ENCODE measurements at regions of chr16 and their contacts with region 1.

Region 1: GRCh38 chr16:67561824-67562525 is 351 bp upstream of the CTCF start:
- DNase-seq: peak; percentile 89 to 97
- H3K4me3 ChIP-seq: peak overlapping the region; percentile 99
- H3K27ac ChIP-seq: peak overlapping the region; percentile 100
- H3K4me1 ChIP-seq: peaks cover 7 to 24% of the 10 kb centered on the region in 2 donors
- H3K27me3 ChIP-seq: no peaks in the 10 kb centered on the region
- CTCF ChIP-seq: no peak

Region 2: GRCh38 chr16:67480833-67481560 is 81.0 kb before region 1 on chr16 and contains the start of gene ATP6V0D1:
- intact Hi-C with region 1: loop called (anchors 5 kb)
- DNase-seq: peak; percentile 88 to 99
- H3K4me3 ChIP-seq: peak within 1 kb of the TSS; percentile 56 to 73
- H3K27ac ChIP-seq: peak within 1 kb of the TSS; percentile 74 to 80
- H3K4me1 ChIP-seq: peaks cover 4 to 24% of the 10 kb centered on the region in 2 donors
- H3K27me3 ChIP-seq: no peaks in the 10 kb centered on the region
- CTCF ChIP-seq: peak; percentile 91 to 94 (median 93)
- total RNA-seq, gene ATP6V0D1: 64.3 TPM

Region 3: DNA sequence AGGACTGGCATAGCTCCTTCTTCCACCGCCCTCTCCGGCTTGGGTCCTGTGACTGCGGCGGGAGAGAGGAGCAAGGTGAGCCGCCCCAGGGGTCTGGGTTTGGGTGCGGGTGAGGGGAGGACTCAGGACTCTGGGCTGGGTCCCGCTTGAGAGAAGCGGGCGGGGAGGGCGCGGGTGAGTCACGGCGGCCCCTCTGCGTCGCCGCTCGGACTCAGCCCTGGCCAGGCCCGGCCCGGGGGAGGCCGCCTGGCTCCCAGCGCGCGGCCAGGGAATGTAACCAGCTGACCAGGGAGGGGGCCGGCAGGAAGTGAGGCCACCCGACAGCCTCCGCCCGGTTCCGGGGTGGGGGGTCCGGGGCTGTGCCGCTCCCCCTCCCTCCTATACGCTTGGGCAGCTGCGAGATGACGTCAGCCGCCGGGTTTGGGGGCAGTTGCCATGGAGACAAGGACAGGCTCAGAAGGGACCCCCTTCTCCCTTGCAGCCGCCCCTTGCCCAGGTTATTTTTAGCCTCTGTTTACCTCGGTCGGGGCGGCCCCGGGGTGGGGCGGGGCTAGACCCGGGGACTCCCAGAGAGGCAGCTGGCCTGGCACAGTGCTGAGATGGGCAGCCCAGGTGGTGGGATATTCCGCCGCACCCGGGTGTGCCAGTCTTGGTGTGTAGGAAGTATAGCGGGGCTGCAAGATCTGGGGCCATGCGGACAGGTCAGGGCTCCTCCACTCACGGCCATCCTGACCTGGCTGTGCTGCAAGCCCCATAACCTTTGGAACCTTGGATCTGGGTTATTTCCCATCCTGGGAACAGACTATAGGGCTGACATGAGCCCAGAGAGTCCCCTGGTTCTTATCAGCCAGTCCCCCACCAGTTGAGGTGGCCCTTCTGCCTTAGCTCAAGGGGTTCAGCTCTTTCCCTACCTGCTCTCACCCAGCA is 31.7 kb before region 1 on chr16:
- intact Hi-C with region 1: loop called (anchors 1 kb)
- DNase-seq: peak; percentile 69 to 94
- H3K4me3 ChIP-seq: peak overlapping the region; percentile 77 to 97
- H3K27ac ChIP-seq: peak overlapping the region; percentile 93 to 99
- H3K4me1 ChIP-seq: peaks cover 7 to 9% of the 10 kb centered on the region in 2 donors
- H3K27me3 ChIP-seq: no peaks in the 10 kb centered on the region
- CTCF ChIP-seq: no peak

Region 4: DNA sequence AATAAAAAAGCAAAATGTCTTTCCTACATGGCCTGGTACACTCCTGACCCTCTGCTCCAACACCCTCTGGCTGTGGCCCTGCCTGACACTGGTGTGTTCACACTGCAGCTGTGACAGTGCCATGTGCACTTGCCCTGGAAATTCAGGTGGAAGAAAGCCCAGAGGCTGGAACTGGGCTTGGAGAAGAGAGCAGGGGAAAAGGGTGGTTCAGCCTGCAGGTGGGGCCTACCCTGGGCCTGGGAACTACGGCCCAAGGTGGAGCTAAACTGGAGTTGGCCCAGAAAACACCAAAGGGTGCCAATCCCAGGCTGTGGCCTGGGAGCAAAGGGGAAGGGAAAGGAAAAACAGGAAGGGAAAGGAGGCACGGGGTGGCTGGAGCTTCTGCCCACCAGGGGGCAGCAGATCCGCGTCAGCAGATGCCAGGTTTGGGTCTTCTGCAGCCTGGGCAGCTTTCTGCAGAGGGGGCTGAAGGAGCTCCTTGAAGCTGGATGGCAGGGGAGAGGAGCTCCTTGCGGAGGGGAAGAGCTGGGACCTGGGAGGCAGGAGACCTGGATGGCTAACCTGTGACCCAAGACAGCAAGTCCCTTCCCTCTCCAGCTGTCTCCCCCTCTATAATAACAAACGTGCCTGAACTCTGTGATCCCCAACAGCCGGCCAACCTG is 15.1 kb before region 1 on chr16:
- intact Hi-C with region 1: loop called (anchors 1 kb)
- DNase-seq: peak in 1 of 2 donors; percentile 85
- H3K4me3 ChIP-seq: no peak overlapping the region
- H3K27ac ChIP-seq: peak overlapping the region; percentile 14 to 23
- H3K4me1 ChIP-seq: peaks cover 4 to 6% of the 10 kb centered on the region in 2 donors
- H3K27me3 ChIP-seq: no peaks in the 10 kb centered on the region
- CTCF ChIP-seq: peak; percentile 79 to 91 (median 85)

Region 5: GRCh38 chr16:67660564-67661028 is 98.6 kb after region 1 on chr16 and contains the start of gene PARD6A:
- intact Hi-C with region 1: loop called (anchors 1 kb)
- DNase-seq: peak; percentile 87 to 98
- H3K4me3 ChIP-seq: peak within 1 kb of the TSS; percentile 62 to 97
- H3K27ac ChIP-seq: peak within 1 kb of the TSS; percentile 86 to 90
- H3K4me1 ChIP-seq: peaks cover 11 to 17% of the 10 kb centered on the region in 2 donors
- H3K27me3 ChIP-seq: no peaks in the 10 kb centered on the region
- CTCF ChIP-seq: no peak
- total RNA-seq, gene PARD6A: 8.4 TPM

Region 6: DNA sequence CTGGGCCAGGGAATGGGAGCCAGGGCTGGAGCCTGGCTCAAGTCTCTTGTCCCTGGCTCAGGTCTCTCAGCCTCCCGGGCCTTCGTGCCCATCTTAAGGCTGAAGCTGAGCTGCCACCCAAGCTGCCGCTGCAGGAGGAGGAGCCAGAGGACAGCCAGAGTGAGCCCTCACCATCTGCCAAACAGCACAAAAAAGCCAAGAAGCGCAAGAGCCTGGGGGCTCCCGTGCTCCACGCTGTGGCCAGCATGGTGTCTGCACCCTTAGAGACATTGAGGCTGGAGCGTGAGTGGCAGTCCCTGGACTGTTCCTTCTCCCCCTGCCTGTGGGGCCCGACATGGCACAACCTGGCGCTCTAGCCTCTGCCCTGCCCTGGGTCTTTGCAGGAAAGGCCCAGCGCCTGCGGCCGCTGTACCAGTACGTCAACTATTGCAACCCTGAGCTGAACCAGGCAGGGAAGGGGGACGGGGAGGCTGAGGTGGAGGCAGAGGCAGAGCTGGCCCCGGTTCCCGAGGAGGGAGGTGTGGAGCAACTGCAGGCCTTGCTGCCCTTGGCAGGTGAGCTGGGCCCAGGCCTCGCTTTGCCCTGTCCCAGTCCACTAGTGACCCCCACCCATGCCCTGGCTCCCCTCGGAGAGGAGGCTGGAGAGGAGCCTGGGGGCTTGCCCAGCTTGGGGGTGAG is 106.0 kb after region 1 on chr16:
- intact Hi-C with region 1: loop called (anchors 1 kb)
- DNase-seq: peak; percentile 66 to 95
- H3K4me3 ChIP-seq: peak overlapping the region; percentile 88 to 97
- H3K27ac ChIP-seq: peak overlapping the region; percentile 91
- H3K4me1 ChIP-seq: peaks cover 9 to 20% of the 10 kb centered on the region in 2 donors
- H3K27me3 ChIP-seq: no peaks in the 10 kb centered on the region
- CTCF ChIP-seq: peak; percentile 90 to 92 (median 92)

Region 7: DNA sequence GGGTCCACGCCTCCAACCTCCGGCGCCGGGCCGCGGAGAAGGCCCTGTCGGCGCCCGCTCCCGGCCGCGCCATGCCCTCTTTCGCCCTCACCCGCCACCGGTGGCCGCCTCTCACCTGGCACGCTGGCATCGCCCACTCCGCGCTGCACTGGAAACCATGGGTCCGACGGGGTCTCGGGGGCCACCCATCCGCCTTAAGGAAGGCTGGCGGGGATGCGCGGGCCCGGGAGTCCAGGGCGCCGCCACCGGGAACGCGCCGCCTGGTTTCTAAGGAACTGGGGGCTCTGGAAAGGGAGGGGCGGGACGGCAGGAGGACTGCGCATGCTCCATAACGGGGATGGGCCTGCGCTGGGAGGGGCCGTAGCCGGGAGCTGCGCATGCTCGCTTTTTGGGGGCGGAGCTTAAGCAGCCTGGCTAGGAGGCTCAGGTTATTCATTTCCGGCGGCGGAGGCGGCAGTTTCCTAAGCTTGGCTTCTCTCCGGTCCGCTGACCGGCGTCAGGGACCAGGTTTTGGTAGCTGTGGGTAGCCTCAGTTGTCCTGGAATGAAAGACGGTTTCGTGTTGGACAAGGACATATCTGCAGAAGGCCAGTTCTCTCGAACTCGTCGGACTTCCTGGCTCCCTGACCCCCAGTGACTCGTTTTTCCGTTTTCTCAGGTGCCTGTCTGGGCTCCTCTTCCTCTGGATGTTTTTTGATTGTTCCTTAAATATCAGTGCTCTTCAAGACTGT is 157.2 kb after region 1 on chr16 and contains the start of gene GFOD2:
- intact Hi-C with region 1: loop called (anchors 2 kb)
- DNase-seq: peak; percentile 78 to 98
- H3K4me3 ChIP-seq: peak within 1 kb of the TSS; percentile 87 to 99
- H3K27ac ChIP-seq: peak within 1 kb of the TSS; percentile 87 to 94
- H3K4me1 ChIP-seq: peaks cover 0 to 12% of the 10 kb centered on the region in 2 donors
- H3K27me3 ChIP-seq: no peaks in the 10 kb centered on the region
- CTCF ChIP-seq: no peak
- total RNA-seq, gene GFOD2: 43.5 TPM

Measured in ascending aorta (tissue), 2 donors.